Activated T-helper 1 cell treated with anti-CD3 and anti-CD28 coated beads, Interleukin-12 subunit alpha, Interleukin-12 subunit beta, Interleukin-2, Interleukin-4 antibody, amounts not matched to agents 30 ng/mL and 10 ng/mL and 1 ng/mL, durations not matched to agents 14 hours and 24 hours and 36 hours (primary cell): ENCODE measurements at regions of chr18 and their contacts with region 1.

Region 1: GRCh38 chr18:58043491-58044379 is at the start of gene NEDD4L:
- DNase-seq: peak; percentile 66
- H3K4me3 Mint-ChIP-seq: peak within 1 kb of the TSS; percentile 91
- H3K27ac Mint-ChIP-seq: peak within 1 kb of the TSS; percentile 69
- H3K4me1 Mint-ChIP-seq: peaks cover 29% of the 10 kb centered on the region
- H3K27me3 Mint-ChIP-seq: peaks cover 51% of the 10 kb centered on the region
- total RNA-seq, gene NEDD4L: 3.4 and 3.8 TPM in 2 replicates

Region 2: DNA sequence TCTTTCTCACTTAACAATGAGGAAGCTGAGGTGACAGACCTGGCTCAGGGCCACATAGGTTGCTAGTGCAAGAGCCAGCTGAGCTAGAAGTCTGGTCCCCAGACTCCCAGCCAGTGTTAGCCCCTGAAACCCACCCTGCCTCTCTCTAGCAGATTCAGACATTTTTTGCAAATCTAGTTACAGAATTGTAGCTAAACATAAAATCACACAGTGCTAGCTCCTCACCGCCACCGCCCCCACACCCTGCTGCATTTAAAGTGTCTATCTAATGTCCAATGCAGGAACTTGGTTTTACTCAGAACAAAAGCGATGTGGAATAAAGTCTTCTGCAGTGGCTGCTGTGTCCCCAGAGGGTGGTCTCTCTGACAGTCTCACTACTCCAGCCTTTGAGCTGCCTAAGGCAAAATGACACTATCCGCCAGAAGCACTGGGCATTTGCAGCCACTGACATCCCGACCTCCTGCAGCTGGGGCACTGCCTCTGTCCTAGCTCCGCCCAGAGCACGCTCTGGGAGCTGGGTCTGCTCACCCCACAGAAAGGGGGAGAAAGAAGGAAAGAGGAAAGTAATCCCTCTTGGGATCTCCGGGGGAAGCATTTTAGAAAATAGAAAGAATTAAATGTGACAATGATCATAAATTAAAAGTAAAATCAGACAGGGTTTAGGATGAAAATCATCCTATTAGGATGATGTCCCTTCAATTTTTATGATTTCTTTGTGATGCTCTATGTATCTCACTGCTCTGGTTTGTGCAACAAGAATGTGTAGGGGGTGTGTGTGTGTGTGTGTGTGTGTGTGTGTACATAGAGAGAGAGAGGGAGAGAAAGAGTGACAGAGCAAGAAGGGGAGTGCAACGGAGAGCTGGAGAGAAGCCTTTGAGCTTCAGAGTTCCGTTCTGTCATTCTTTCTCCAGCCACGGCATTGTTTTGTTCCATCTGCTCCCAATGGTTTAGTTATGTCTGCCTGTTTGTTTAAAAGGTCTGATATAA is 741.9 kb before region 1 on chr18:
- intact Hi-C with region 1: no loop called
- DNase-seq: no peak
- H3K4me3 Mint-ChIP-seq: no peak overlapping the region
- H3K27ac Mint-ChIP-seq: no peak overlapping the region
- H3K4me1 Mint-ChIP-seq: no peaks in the 10 kb centered on the region
- H3K27me3 Mint-ChIP-seq: no peaks in the 10 kb centered on the region

Region 3: GRCh38 chr18:57621246-57621604 is 422.5 kb before region 1 on chr18:
- intact Hi-C with region 1: loop called (anchors 1 kb)
- DNase-seq: no peak
- H3K4me3 Mint-ChIP-seq: peak overlapping the region; percentile 85
- H3K27ac Mint-ChIP-seq: peak overlapping the region; percentile 87
- H3K4me1 Mint-ChIP-seq: peaks cover 9% of the 10 kb centered on the region
- H3K27me3 Mint-ChIP-seq: no peaks in the 10 kb centered on the region

Region 4: DNA sequence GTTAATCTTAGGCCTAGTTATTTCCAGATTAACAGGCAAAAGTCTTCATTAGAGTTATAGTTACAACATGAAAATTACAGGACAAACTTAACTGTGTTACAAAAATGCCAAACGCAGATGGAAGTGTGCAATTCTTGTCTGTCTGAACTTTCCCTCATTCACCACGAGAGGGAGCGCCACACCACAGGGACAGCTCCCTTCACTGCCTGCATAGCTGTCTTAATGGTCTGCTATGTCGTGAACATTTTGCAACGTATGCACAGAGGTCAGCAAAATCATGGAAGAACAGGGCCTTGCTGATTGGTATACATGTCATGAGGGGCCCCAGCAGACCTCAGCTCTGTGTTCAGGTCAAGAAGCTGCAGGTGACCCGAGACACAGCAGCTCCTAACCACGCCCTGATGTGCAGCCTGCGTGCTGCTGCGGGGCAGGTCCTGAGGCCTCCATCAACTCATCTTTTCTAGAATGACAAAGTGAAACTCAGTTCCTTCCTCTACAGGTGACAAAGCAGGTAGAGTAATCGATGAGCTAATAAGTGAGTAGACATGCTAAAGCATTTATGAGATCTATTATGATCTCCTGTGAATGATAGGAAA is 161.8 kb before region 1 on chr18:
- intact Hi-C with region 1: loop called (anchors 5 kb)
- DNase-seq: peak; percentile 13
- H3K4me3 Mint-ChIP-seq: no peak overlapping the region
- H3K27ac Mint-ChIP-seq: no peak overlapping the region
- H3K4me1 Mint-ChIP-seq: no peaks in the 10 kb centered on the region
- H3K27me3 Mint-ChIP-seq: peaks cover 3% of the 10 kb centered on the region

Region 5: DNA sequence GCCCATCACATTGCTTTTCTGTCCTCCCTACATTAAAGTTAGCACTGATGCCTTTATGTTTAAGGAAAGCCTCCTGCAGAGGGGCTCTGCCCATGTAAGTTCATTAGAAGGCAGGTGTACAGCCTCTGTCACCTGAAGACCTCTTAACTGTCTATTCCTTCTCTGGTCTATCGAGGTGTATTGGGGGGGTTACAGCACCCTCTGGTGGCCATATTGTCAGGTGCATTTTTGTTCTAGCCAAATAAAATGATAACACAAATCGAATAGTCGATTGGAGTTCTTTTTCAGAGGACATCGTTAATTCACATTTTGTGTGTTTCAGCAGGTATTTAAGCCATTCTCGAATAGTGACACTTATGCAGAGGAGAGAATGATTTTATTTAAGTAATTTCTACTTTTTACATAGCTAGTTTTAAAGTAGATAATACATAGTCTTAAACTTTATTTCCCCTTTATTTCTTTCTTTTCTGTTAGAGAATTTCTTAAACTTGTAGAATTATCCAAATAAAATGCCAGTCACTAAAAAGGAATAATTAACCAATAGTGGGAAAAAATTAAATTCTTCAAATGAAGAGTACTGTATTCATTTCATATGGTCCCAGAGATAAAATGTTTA is 137.1 kb after region 1 on chr18:
- intact Hi-C with region 1: loop called (anchors 1 kb)
- DNase-seq: peak; percentile 11
- H3K4me3 Mint-ChIP-seq: no peak overlapping the region
- H3K27ac Mint-ChIP-seq: no peak overlapping the region
- H3K4me1 Mint-ChIP-seq: no peaks in the 10 kb centered on the region
- H3K27me3 Mint-ChIP-seq: peaks cover 9% of the 10 kb centered on the region

Region 6: GRCh38 chr18:58615140-58616132 is 571.7 kb after region 1 on chr18:
- intact Hi-C with region 1: loop called (anchors 10 kb)
- DNase-seq: peak; percentile 71
- H3K4me3 Mint-ChIP-seq: peak overlapping the region; percentile 63
- H3K27ac Mint-ChIP-seq: peak overlapping the region; percentile 96
- H3K4me1 Mint-ChIP-seq: peaks cover 41% of the 10 kb centered on the region
- H3K27me3 Mint-ChIP-seq: peaks cover 8% of the 10 kb centered on the region

Region 7: DNA sequence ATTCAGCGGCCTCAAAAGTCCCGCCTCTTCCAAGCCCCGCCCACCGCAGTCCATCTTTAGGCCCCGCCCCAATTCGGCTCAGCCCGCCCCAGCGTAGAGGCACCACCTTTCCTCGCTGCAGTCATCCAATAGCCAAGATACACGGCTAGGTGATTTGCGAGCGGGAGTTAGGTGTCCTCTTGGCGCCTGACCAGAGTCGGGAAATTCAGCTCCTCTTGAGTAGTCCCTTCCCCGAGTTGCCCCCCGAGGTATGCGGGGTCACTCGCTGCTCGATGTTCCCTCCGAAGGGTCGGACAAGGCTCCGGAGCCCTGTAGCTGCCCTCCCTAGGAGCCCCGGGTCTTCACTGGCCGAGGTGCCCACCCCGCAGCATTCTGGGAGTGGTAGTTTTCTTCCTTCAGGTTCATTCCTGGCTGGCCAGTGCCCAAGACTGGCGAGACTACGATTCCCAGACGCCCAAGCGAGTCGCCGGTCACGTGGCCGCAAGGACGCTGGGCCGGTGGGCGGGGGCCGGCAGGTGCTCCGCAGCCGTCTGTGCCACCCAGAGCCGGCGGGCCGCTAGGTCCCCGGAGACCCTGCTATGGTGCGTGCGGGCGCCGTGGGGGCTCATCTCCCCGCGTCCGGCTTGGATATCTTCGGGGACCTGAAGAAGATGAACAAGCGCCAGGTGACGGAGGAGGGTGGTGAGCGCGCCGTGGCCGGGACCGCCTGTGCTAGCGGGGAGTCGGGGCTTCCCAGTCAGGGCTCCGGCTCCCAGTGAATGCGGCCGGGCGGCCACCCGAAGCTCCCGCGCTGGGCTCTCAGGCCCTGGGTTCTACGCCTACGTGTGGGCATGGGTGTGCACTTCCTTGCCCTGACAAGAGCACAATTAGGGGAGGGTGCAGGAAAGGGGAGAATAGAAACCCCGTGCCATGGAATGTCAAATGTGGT is 1095.9 kb after region 1 on chr18 and contains the start of gene SEC11C:
- intact Hi-C with region 1: loop called (anchors 10 kb)
- DNase-seq: peak; percentile 96
- H3K4me3 Mint-ChIP-seq: peak within 1 kb of the TSS; percentile 94
- H3K27ac Mint-ChIP-seq: peak within 1 kb of the TSS; percentile 98
- H3K4me1 Mint-ChIP-seq: peaks cover 34% of the 10 kb centered on the region
- H3K27me3 Mint-ChIP-seq: peaks cover 19% of the 10 kb centered on the region
- total RNA-seq, gene SEC11C: 147 and 148 TPM in 2 replicates